ENCODE measurements at regions of chr18 and their contacts with region 1.

Region 1: DNA sequence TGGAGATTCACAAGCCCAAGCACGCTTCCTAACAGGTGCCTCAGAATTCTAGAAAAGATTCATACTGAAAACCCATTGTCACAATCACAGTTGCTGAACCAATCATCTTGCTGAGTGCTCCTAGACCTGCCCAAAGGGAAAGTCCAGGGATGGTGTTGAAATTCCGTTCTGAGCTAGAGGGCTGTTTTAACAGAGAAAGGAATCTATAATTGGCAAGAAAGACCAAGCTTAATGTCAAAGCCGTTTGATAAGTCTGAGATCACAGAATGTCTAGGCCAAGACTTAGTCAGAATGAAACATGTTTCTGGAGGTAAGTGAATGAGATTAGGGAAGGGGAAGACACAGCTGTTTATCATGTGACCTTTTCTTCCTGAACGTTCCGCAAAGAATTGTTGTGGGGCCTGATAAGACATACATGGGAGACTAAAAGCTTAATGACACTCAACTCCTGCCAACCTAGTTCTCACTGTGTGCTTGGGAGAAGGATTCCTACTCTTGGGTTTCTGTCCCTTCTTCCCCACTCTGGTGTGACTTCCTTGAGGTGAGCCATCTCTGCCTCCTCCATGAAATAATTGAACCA is 27.5 kb downstream of the PMAIP1 start:
- DNase-seq: peak; percentile 98
- ATAC-seq: peak; percentile 82
- H3K4me3 ChIP-seq: no peak overlapping the region
- H3K27ac ChIP-seq: peak overlapping the region; percentile 93
- H3K4me1 ChIP-seq: peaks cover 49% of the 10 kb centered on the region
- H3K27me3 ChIP-seq: no peaks in the 10 kb centered on the region
- CTCF ChIP-seq: no peak
- EP300 ChIP-seq: peak; percentile 63 to 67; a peak in 3 of 4 replicates
- POLR2A ChIP-seq: no peak
- RAD21 ChIP-seq: no peak

Region 2: DNA sequence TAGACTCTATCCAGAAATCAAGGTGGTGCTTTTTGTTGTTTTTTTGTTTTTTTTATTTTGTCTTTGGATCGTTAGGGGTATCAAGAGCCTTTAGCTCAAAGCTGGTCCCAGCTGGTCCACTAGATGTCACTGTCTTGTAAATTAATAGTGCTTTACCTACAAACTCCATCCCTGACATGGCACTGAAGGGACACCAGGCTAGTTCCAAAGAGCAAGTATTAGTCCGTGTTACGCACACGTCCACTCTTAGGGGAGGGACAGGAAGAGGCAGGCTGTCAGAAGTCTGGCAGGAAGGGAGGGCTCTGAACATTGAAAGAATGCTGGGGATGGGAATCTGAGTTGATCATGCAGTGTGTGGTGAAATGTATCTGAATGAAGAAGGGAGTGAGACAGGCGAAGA is 144.2 kb before region 1 on chr18:
- CTCF ChIA-PET with region 1: no interaction called
- POLR2A ChIA-PET with region 1: no interaction called
- RAD21 ChIA-PET with region 1: no interaction called
- SMC1A ChIA-PET with region 1: no interaction called
- in situ Hi-C with region 1: no loop called
- intact Hi-C with region 1: no loop called
- DNase-seq: peak; percentile 9
- ATAC-seq: peak; percentile 98
- H3K4me3 ChIP-seq: no peak overlapping the region
- H3K27ac ChIP-seq: no peak overlapping the region
- H3K4me1 ChIP-seq: no peaks in the 10 kb centered on the region
- H3K27me3 ChIP-seq: no peaks in the 10 kb centered on the region
- CTCF ChIP-seq: peak; percentile 63 to 71 (median 71); a peak in 5 of 6 replicates
- EP300 ChIP-seq: no peak
- POLR2A ChIP-seq: no peak
- RAD21 ChIP-seq: peak; percentile 81

Region 3: DNA sequence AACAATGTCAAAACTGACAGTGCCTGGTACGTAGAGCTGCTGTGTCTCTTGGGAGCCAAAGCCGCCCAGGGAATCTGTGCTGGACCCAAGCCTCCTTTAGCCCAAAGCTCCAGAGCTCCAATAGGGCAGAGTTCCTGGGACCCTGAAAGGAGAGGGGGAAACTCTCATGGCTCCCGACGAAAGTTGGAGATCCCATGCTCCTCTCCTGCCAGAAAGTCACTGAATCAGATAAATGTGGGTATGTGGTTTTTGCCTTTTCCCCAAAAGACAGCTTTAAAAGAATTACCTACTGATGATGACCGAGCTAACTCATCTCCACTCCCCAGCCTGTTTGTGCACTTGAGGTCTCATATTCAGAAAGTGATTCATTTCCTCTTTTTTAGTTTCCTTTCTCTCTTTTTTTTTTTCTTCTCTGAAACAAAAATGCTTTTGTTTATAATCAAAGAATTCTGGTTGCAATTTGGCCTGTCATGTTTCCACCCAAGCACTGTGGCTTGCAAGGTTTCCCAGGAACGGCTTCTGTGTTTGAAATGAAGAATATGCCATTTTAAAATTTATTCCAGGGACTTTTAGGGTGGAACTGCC is 41.7 kb before region 1 on chr18:
- CTCF ChIA-PET with region 1: interaction called, 4 read pairs
- POLR2A ChIA-PET with region 1: interaction called, 6 read pairs
- RAD21 ChIA-PET with region 1: interaction called, 5 read pairs
- SMC1A ChIA-PET with region 1: interaction called, 11 read pairs
- in situ Hi-C with region 1: no loop called
- intact Hi-C with region 1: no loop called
- DNase-seq: peak; percentile 78
- ATAC-seq: peak; percentile 86
- H3K4me3 ChIP-seq: peak overlapping the region; percentile 63
- H3K27ac ChIP-seq: peak overlapping the region; percentile 91
- H3K4me1 ChIP-seq: peaks cover 38% of the 10 kb centered on the region
- H3K27me3 ChIP-seq: no peaks in the 10 kb centered on the region
- CTCF ChIP-seq: no peak
- EP300 ChIP-seq: peak; percentile 88 to 95
- POLR2A ChIP-seq: no peak
- RAD21 ChIP-seq: 0 out of 2 replicates have a peak, but pooled peaks have one; percentile 4

Region 4: GRCh38 chr18:59941331-59941730 is 14.0 kb after region 1 on chr18:
- CTCF ChIA-PET with region 1: interaction called, 5 read pairs
- POLR2A ChIA-PET with region 1: interaction called, 8 read pairs
- RAD21 ChIA-PET with region 1: interaction called, 6 read pairs
- SMC1A ChIA-PET with region 1: interaction called, 29 read pairs
- in situ Hi-C with region 1: no loop called
- intact Hi-C with region 1: no loop called
- DNase-seq: no peak
- ATAC-seq: 0 out of 3 replicates have a peak, but pooled peaks have one; percentile 23
- H3K4me3 ChIP-seq: no peak overlapping the region
- H3K27ac ChIP-seq: no peak overlapping the region
- H3K4me1 ChIP-seq: peaks cover 7% of the 10 kb centered on the region; the same call in 1 of the 2 replicates
- H3K27me3 ChIP-seq: no peaks in the 10 kb centered on the region
- CTCF ChIP-seq: no peak
- EP300 ChIP-seq: no peak
- POLR2A ChIP-seq: no peak
- RAD21 ChIP-seq: no peak

Region 5: DNA sequence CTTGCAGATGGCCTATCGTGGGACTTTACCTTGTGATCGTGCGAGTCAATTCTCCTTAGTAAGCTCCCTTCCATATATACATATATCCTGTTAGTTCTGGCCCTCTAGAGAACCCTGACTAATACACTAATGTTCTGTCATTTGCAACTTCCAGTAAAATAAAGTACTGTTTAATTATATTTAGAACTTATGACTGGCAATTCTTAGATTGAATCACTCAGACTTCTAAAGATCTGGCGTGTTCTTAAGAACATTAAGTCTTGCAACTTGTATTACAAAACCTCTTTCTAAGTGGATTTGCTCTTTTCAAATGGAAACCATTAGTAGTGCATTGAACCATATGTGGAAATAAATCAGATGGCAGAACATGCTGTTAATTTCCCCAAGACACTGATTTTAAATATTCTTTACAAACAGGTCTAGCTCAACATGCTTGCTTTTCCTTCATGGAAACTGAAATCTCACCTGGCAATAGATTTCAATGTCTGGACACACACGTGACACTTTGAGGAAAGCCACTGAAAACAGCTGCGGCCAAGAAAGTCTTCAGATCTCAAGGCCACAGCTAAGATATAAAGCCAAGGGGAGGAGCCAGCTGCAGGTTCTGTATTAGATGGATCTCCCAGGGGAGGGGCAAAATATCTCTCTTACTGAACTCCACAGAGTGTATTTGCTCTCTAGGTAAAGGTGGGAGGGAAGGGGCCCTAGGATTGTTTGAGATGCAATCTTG is 23.0 kb after region 1 on chr18:
- CTCF ChIA-PET with region 1: interaction called, 15 read pairs
- POLR2A ChIA-PET with region 1: interaction called, 23 read pairs
- RAD21 ChIA-PET with region 1: interaction called, 54 read pairs
- SMC1A ChIA-PET with region 1: interaction called, 257 read pairs
- in situ Hi-C with region 1: no loop called
- intact Hi-C with region 1: loop called (anchors 1 kb)
- DNase-seq: no peak
- ATAC-seq: peak; percentile 48
- H3K4me3 ChIP-seq: no peak overlapping the region; the same call in 1 of the 2 replicates
- H3K27ac ChIP-seq: no peak overlapping the region
- H3K4me1 ChIP-seq: peaks cover 40% of the 10 kb centered on the region
- H3K27me3 ChIP-seq: no peaks in the 10 kb centered on the region
- CTCF ChIP-seq: no peak
- EP300 ChIP-seq: 0 out of 4 replicates have a peak, but pooled peaks of 1 of the 2 experiments have one; percentile 49
- POLR2A ChIP-seq: no peak
- RAD21 ChIP-seq: no peak

Region 6: GRCh38 chr18:60188958-60189357 is 261.6 kb after region 1 on chr18:
- CTCF ChIA-PET with region 1: no interaction called
- POLR2A ChIA-PET with region 1: no interaction called
- RAD21 ChIA-PET with region 1: no interaction called
- SMC1A ChIA-PET with region 1: no interaction called
- in situ Hi-C with region 1: no loop called
- intact Hi-C with region 1: no loop called
- DNase-seq: no peak
- ATAC-seq: no peak
- H3K4me3 ChIP-seq: no peak overlapping the region
- H3K27ac ChIP-seq: no peak overlapping the region
- H3K4me1 ChIP-seq: no peaks in the 10 kb centered on the region
- H3K27me3 ChIP-seq: peaks cover 0 to 3% of the 10 kb centered on the region in 2 experiments; a peak in 1 of 4 replicates
- CTCF ChIP-seq: no peak
- EP300 ChIP-seq: no peak
- POLR2A ChIP-seq: no peak
- RAD21 ChIP-seq: no peak

Measured in GM12878 (cell line).